ENCODE measurements at regions of chr5 and their contacts with region 1.

Region 1: DNA sequence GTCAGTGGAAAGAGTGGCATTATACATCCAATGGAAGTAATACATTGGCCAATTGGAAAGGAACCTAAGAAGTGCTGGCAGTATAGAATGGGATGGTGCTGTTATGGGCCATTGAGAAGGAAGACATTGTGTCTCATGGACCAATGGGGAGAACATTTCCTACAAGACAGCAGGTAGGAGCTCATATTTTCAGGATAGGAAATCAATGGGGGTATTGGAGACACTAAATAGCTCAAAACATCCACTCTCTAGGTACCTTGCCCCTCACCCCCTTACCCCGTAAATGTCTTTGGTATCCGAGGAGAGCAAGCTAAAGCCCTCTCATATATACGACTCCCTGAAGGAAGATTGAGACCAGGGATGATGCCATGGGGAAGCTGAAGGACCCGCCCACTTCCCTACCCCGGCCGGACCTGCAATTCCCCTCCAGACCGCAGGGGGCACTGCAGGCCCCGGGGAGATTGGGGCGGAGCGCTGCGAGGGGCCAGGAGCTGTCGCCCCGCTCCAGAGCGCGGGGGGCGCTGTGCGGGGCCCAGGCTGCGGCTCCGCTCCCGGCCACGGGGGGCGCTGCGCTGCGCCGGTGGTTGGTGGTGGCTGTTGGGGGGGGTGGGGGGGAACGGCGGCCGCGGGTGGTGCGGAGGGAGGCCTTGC is at the start of gene KDM3B:
- DNase-seq: peak; percentile 87
- ATAC-seq: peak; percentile 66
- H3K4me3 ChIP-seq: peak within 1 kb of the TSS; percentile 93
- H3K27ac ChIP-seq: peak within 1 kb of the TSS; percentile 49
- H3K4me1 ChIP-seq: peaks cover 9% of the 10 kb centered on the region
- H3K27me3 ChIP-seq: no peaks in the 10 kb centered on the region
- CTCF ChIP-seq: peak; percentile 91
- total RNA-seq, gene KDM3B: 21.7 and 25.6 TPM in 2 replicates

Region 2: DNA sequence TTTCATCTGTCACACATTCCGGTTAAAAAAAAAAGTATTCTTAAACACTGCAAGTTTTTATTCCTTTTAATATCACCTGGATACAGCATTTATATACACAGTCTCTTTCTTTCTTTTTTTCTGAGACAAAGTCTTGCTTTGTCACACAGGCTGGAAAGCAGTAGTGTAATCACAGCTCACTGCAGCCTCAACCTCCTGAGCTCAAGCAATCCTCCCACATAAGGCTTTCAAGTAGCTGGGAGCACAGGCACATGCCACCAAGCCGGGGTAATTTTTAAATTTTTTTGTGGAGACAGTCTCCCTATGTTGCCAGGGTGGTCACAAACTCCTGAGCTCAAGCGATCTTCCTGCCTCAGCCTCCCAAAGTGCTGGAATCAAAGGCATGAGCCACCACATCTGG is 159.4 kb before region 1 on chr5:
- CTCF ChIA-PET with region 1: no interaction called
- POLR2A ChIA-PET with region 1: no interaction called
- intact Hi-C with region 1: no loop called
- DNase-seq: no peak
- ATAC-seq: no peak
- H3K4me3 ChIP-seq: no peak overlapping the region
- H3K27ac ChIP-seq: no peak overlapping the region
- H3K4me1 ChIP-seq: no peaks in the 10 kb centered on the region
- H3K27me3 ChIP-seq: no peaks in the 10 kb centered on the region
- CTCF ChIP-seq: no peak

Region 3: DNA sequence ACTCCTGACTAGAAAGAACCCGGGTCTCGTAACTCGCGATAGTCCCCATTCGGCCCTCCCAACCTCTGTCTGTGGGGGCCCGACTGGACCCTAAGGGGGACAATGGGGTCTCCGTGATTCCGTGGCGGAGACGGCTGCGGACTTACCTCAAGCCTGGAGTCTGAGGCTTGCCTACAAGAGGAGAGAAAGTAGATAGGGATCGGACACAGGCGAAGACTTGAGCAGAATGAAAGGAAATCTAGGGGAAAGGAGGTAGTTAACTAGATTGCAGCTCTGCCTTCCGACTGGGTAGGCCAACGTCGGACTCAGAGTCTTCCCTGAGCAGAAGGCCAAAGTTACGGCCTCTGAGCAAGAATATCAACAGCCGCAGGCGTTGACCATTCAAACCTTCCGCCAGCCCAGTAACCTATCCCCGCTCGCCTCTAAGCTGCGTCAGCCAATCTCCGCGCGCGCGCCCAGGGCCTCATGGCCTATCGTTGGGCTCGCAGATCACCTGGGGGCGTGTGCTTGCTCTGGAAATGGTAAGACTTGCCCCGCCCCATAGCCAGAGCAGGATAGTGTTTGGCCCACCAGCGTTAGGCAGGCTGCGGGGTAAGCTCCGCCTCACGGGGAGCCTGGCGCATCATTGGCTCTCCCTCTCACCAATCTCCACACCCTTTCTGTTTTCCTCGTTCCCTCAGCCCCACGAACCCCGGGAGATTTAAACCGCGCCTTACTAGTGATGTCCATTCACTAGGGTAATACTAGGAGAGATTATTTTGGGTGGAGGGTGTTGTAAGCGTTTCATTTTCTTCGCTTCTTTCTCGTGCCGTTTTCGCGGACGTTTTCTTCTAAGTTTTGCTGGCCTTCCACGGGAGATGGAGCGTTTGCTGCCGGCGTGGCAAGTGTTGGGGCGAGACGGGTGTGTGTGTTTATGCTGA is 20.5 kb before region 1 on chr5 and contains the start of gene CDC25C:
- CTCF ChIA-PET with region 1: interaction called, 10 read pairs
- POLR2A ChIA-PET with region 1: no interaction called
- intact Hi-C with region 1: no loop called
- DNase-seq: peak; percentile 97
- ATAC-seq: peak; percentile 99
- H3K4me3 ChIP-seq: peak within 1 kb of the TSS; percentile 89
- H3K27ac ChIP-seq: peak within 1 kb of the TSS; percentile 57
- H3K4me1 ChIP-seq: peaks cover 9% of the 10 kb centered on the region; the same call in 1 of the 2 replicates
- H3K27me3 ChIP-seq: no peaks in the 10 kb centered on the region
- CTCF ChIP-seq: no peak
- total RNA-seq, gene CDC25C: 13.8 and 14.7 TPM in 2 replicates